ENCODE measurements at regions of chr14 and their contacts with region 1.

Region 1: DNA sequence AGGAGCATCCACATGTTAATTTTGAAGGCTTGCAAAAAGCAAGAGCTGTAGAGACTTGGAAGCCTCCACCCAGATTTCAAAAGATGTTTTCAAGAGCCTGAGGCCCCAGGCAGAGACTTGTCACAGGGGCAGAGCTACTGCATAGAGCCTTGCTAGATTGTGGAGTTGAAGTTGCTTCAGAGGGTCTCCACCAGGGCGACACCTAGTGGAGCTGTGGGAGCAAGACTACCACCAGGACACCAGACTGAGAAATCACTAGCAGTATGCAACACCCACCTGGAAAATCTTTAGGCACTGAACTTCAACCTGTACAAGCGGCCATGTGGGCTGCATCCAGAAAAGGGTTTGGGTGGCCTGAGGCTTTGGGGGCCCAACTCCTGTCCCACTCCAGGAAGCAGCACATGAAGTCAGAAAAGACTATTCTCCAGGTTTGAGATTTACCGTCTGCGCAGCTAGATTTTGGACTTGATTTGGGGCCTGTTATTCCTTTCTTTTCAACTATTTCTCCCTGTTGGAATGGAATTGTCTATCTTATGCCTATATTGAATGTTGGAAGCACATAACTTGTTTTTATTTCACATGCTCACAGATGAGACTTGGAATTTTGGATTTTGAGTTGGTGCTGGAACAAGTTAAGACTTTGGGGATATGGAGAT is 508.6 kb downstream of the FLRT2 start:
- DNase-seq: peak; percentile 12
- H3K4me3 Mint-ChIP-seq: no peak overlapping the region
- H3K27ac Mint-ChIP-seq: no peak overlapping the region
- H3K4me1 Mint-ChIP-seq: no peaks in the 10 kb centered on the region
- H3K27me3 Mint-ChIP-seq: no peaks in the 10 kb centered on the region

Region 2: GRCh38 chr14:85934123-85934885 is 104.2 kb before region 1 on chr14:
- intact Hi-C with region 1: loop called (anchors 10 kb)
- DNase-seq: peak; percentile 58
- H3K4me3 Mint-ChIP-seq: peak overlapping the region; percentile 91
- H3K27ac Mint-ChIP-seq: peak overlapping the region; percentile 91
- H3K4me1 Mint-ChIP-seq: peaks cover 29% of the 10 kb centered on the region
- H3K27me3 Mint-ChIP-seq: no peaks in the 10 kb centered on the region

Measured in activated T-helper 2 cell treated with anti-CD3 and anti-CD28 coated beads, Interferon-gamma antibody, Interleukin-2, Interleukin-4, amounts not matched to agents 10 μg/mL and 5 μg/mL and 100 μg/mL, durations not matched to agents 14 hours and 24 hours and 36 hours (primary cell).